ENCODE measurements at regions of chr14 and their contacts with region 1.

Region 1: DNA sequence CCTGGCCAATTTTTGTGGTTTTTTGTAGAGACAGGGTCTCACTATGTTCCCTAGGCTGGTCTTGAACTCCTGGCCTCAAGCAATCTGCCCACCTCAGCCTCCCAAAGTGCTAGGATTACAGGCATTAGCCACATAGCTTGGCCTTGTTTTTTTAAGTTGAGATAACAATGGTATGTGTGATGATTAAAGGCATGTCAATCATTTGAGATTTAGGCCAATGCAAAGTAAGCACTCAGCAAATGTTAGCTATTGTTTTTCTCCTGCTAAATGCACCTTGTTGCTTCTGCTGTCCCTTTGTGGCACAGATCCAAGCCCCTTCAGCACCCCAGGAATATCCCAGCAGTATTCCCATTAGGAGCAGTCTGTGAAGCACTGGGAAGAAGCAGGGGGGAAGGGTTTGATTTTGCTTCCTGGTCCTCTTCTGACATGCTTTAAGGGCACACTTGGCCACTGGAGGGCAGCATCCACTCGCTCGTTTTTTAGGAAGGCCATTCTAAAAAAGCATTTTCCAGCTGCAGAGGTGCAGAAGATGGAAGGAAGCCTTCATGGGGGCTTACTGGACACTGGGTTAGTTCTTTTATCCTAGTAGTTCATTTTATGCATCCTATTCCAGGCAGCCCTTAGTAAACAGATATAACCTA is 70.2 kb upstream of the ZFP36L1 start:
- DNase-seq: peak; percentile 81
- ATAC-seq: peak; percentile 73
- H3K4me3 ChIP-seq: no peak overlapping the region
- H3K27ac ChIP-seq: no peak overlapping the region
- H3K4me1 ChIP-seq: no peaks in the 10 kb centered on the region
- H3K27me3 ChIP-seq: no peaks in the 10 kb centered on the region
- CTCF ChIP-seq: peak; percentile 85
- POLR2A ChIP-seq: 0 out of 2 replicates have a peak, but pooled peaks have one; percentile 41
- RAD21 ChIP-seq: peak; percentile 75

Region 2: DNA sequence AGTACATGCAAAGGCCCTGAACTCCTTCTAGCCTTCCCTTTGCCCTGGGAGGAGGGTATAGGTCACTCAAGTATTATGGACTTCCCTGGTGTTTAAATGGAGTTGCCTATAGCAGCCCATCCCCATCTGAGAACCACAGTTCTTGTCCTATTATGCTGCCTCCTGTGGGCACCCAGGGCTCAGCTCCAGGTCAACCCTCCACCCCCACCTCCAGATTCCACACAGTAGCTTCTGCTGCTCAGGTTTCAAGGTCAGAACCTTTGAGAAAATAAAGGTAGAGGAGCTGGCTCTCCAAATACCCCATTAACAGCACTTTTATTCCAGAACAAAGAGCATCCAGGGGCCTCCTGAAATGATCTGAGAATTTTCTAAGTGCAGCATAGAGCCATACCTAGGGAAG is 58.6 kb after region 1 on chr14:
- CTCF ChIA-PET with region 1: no interaction called
- POLR2A ChIA-PET with region 1: no interaction called
- dilution Hi-C with region 1: no loop called
- in situ Hi-C with region 1: no loop called
- intact Hi-C with region 1: no loop called
- DNase-seq: no peak
- ATAC-seq: 0 out of 2 replicates have a peak, but pooled peaks have one; percentile 5
- H3K4me3 ChIP-seq: no peak overlapping the region
- H3K27ac ChIP-seq: peak overlapping the region; percentile 32; the same call in 1 of the 2 replicates
- H3K4me1 ChIP-seq: peaks cover 31% of the 10 kb centered on the region
- H3K27me3 ChIP-seq: no peaks in the 10 kb centered on the region
- CTCF ChIP-seq: 0 out of 2 replicates have a peak, but pooled peaks have one; percentile 12
- POLR2A ChIP-seq: no peak
- RAD21 ChIP-seq: no peak

Region 3: GRCh38 chr14:69038455-69039287 is 175.6 kb after region 1 on chr14:
- CTCF ChIA-PET with region 1: no interaction called
- POLR2A ChIA-PET with region 1: no interaction called
- dilution Hi-C with region 1: no loop called
- in situ Hi-C with region 1: no loop called
- intact Hi-C with region 1: no loop called
- DNase-seq: peak; percentile 88
- ATAC-seq: peak; percentile 30
- H3K4me3 ChIP-seq: no peak overlapping the region
- H3K27ac ChIP-seq: peak overlapping the region; percentile 55
- H3K4me1 ChIP-seq: peaks cover 38% of the 10 kb centered on the region
- H3K27me3 ChIP-seq: no peaks in the 10 kb centered on the region
- CTCF ChIP-seq: no peak
- POLR2A ChIP-seq: no peak
- RAD21 ChIP-seq: no peak

Region 4: GRCh38 chr14:69107407-69108003 is 244.4 kb after region 1 on chr14:
- CTCF ChIA-PET with region 1: interaction called, 5 read pairs
- POLR2A ChIA-PET with region 1: interaction called, 9 read pairs
- dilution Hi-C with region 1: no loop called
- in situ Hi-C with region 1: loop called (anchors 10 kb)
- intact Hi-C with region 1: loop called (anchors 1 kb)
- DNase-seq: peak; percentile 71
- ATAC-seq: peak; percentile 67
- H3K4me3 ChIP-seq: no peak overlapping the region
- H3K27ac ChIP-seq: no peak overlapping the region
- H3K4me1 ChIP-seq: 0 out of 2 replicates have a peak, but pooled peaks cover 2% of the 10 kb centered on the region
- H3K27me3 ChIP-seq: no peaks in the 10 kb centered on the region
- CTCF ChIP-seq: peak; percentile 84
- POLR2A ChIP-seq: no peak
- RAD21 ChIP-seq: peak; percentile 94

Measured in IMR-90 (cell line).